Activated CD8-positive, alpha-beta memory T cell treated with anti-CD3 and anti-CD28 coated beads, Interleukin-2, amount 10 ng/mL, durations not matched to agents 7 days and 5 days (primary cell): ENCODE measurements at regions of chr7 and their contacts with region 1.

Region 1: DNA sequence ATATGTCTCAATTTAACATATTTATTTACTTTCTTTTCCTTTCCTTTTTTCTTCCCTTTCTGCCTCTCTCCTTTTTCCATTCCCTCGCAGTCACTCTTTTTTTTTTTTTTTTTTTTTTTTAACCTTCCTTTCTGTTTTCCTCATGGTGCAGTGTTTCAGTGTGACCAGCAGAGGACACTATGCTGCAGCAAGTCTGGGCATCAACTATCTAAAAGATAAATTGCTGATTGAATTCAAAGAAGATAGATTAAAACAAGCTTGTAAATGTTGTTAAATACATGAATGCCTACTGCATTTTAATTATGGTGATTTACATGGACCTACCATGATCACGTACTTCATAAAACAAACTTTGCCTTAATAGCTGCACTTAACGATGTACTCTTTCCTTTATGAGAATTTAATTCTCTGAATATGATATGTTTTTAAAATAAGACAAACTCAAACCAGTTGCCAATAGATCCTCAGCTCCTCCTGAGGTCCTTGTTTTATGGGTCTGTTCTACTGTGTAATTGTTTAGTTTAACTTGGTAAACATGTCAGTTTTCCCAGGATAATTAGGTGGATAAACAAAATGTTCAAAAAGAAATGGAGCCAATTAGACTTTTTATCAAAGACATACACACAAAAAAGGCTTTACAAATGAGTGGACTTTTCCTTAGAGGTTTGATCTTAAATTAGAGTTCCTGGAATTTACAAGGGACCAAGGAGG is 101.0 kb upstream of the AGR3 start:
- DNase-seq: no peak
- ATAC-seq: no peak
- H3K4me3 Mint-ChIP-seq: no peak overlapping the region
- H3K27ac Mint-ChIP-seq: no peak overlapping the region
- H3K4me1 Mint-ChIP-seq: peaks cover 10% of the 10 kb centered on the region
- H3K27me3 Mint-ChIP-seq: peaks cover 20% of the 10 kb centered on the region

Region 2: DNA sequence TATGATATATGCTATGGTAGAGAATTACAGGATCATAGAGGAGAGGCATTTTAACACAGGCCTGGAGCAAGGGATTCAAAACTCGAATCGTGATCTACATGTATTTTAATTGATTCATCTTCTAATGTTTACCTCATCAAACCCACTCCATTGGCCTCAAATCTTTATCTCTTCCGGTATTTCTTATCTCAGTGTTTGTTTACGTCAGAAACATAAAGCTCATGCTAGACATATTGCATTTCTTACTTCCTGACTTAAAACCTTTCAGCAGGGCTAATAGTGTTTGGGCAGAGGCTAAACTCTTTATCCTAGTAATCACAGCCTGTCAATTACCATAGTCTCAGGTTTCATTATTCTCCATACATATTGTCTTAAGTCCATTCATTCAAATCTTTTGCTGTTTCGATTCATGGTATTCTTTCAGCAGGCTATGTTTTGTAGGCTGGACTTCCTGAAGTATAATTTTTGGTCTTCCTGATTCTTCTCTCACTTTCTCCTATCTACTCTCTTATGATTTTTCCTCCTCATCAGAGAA is 19.7 kb before region 1 on chr7:
- CTCF ChIA-PET with region 1: no interaction called
- DNase-seq: no peak
- ATAC-seq: no peak
- H3K4me3 Mint-ChIP-seq: no peak overlapping the region
- H3K27ac Mint-ChIP-seq: no peak overlapping the region
- H3K4me1 Mint-ChIP-seq: no peaks in the 10 kb centered on the region
- H3K27me3 Mint-ChIP-seq: peaks cover 2% of the 10 kb centered on the region

Region 3: DNA sequence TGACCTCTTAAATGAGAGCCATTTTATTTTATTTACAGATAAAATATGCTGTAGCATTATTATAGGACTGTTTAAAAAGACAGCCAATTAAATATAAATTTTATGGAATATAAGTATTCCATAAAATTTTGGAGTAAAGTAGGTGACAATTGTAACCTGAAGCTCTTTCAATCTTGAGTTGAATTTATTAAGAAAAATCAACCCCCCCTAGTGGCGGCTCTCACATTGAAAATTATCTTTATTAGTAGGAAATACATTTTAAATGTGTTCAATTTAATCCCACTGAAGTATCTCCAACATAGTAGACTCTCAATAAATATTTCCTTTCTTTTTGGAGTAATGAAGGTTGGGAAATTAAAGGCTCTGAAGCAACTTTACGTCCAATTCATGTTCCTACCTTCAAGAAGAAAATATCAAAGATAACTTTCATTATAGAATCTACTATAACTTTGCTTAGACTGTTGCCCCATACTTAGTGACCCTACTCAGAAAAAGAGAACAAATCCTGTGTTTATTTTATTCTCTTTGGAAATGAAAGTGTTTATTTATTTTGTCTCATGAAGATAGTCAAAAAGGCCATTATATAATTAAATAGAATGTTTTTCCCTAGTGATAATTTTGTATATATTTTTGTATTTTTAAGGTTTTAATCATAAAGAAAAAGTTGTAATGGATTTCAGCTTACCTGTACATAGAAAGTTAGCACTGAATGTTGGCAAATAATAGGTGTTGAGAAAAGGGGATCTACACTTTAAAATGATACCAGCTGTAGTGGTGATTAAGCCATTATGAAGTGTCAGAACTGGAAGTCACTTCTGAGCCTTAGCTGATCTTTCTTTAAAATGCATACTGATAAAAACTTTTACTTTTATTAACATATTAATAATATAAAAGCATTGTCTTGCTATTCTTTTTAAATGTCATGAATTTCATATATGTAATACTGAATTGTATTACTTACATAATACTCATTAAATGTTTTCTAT is 319.0 kb after region 1 on chr7:
- CTCF ChIA-PET with region 1: interaction called, 16 read pairs
- DNase-seq: peak; percentile 48
- ATAC-seq: no peak
- H3K4me3 Mint-ChIP-seq: peak overlapping the region; percentile 91
- H3K27ac Mint-ChIP-seq: no peak overlapping the region
- H3K4me1 Mint-ChIP-seq: peaks cover 50% of the 10 kb centered on the region
- H3K27me3 Mint-ChIP-seq: no peaks in the 10 kb centered on the region